A549 (cell line): ENCODE measurements at regions of chr4 and their contacts with region 1.

Region 1: DNA sequence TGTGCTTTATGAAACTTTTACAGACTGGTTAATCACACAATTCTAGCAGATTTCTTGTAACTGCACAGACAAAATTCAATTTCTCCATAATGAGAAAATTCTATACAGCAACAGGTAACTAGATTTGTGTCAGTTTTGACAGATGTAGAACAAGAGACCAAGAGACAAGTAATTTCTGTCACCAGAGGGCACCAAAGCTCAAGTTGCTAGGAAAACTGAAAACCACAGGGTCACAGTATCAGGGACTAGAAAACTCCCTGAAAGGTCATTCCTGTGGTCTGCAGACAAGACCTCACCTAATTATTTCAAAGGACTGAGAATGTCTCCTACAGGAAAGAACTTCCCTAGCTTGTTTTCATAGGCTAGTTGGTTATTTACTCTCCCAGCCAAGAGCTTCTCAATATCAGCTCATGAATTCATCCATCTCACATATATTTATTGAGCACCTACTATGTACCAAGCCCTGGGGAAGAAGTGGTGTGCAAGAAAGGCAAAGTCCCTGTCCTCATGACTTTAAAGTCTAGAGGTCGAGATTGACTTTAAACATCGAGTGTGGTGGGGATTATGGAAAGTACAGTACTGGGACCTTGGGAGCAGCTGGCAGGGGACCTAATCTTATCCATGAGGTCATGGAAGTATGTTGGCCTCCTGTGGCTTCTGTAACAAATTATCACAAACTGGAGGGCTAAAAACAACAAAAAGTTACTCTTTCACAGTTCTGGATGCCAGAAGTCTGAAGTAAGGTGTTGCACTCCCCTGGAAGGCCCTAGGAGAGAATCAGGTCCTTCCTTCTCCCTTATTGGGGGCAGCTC is 47.8 kb upstream of the SETD7 start:
- DNase-seq: peak; percentile 38 to 80
- ATAC-seq: peak; percentile 43 to 51; a peak in 3 of 6 replicates
- H3K4me3 ChIP-seq: no peak overlapping the region
- H3K27ac ChIP-seq: peak overlapping the region; percentile 66 to 94
- H3K4me1 ChIP-seq: peaks cover 67% of the 10 kb centered on the region
- CTCF ChIP-seq: peak; percentile 73
- EP300 ChIP-seq: no peak
- POLR2A ChIP-seq: no peak
- RAD21 ChIP-seq: peak; percentile 77 to 81

Region 2: GRCh38 chr4:139488442-139488841 is 115.3 kb before region 1 on chr4:
- CTCF ChIA-PET with region 1: no interaction called
- POLR2A ChIA-PET with region 1: no interaction called
- DNase-seq: no peak
- ATAC-seq: no peak
- H3K4me3 ChIP-seq: no peak overlapping the region
- H3K27ac ChIP-seq: no peak overlapping the region
- H3K4me1 ChIP-seq: no peaks in the 10 kb centered on the region
- CTCF ChIP-seq: no peak
- EP300 ChIP-seq: no peak
- POLR2A ChIP-seq: no peak
- RAD21 ChIP-seq: no peak

Region 3: DNA sequence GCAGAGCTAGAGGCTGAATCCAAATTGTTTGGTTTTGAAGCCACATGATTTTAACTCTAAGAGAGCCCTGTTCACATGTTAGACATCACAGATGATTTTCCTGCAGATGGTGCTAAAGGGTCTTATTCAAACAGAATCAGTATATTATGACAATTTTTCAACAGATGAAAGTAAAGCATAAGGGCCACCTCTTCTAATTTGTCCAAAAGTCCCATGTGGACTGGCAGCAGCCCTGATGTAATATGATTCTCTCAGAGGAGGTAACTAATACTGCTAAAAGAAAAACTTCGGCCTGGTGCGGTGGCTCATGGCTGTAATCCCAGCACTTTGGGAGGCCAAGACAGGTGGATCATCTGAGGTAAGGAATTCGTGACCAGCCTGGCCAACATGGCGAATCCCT is 21.7 kb before region 1 on chr4:
- CTCF ChIA-PET with region 1: interaction called, 11 read pairs
- POLR2A ChIA-PET with region 1: interaction called, 6 read pairs
- DNase-seq: no peak
- ATAC-seq: peak; percentile 54 to 64; a peak in 2 of 6 replicates
- H3K4me3 ChIP-seq: no peak overlapping the region
- H3K27ac ChIP-seq: peak overlapping the region in 1 of 2 experiments; percentile 39; a peak in 1 of 6 replicates
- H3K4me1 ChIP-seq: peaks cover 11% of the 10 kb centered on the region
- CTCF ChIP-seq: 0 out of 3 replicates have a peak, but pooled peaks have one; percentile 24
- EP300 ChIP-seq: no peak
- POLR2A ChIP-seq: no peak
- RAD21 ChIP-seq: peak; percentile 42 to 47; a peak in 4 of 5 replicates

Region 4: DNA sequence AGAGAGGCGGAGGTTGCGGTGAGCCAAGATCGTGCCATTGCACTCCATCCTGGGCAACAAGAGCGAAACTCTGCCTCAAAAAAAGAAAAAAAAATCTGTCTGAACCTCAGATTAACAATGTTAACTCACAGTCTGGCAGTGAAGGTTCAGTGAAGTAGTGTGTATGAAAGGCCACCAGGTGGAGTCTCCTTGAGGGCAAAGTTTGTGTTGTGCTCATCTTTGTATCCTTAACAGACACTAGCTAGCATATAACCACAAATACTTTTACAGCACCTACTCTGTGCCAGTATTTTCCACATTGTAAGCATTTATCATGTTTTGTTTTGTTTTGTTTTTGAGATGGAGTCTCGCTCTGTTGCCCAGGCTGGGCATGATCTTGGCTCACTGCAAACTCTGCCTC is 15.9 kb after region 1 on chr4:
- CTCF ChIA-PET with region 1: interaction called, 64 read pairs
- POLR2A ChIA-PET with region 1: interaction called, 3 read pairs
- DNase-seq: peak in 1 of 2 experiments; percentile 55
- ATAC-seq: peak; percentile 62 to 92; a peak in 4 of 6 replicates
- H3K4me3 ChIP-seq: no peak overlapping the region
- H3K27ac ChIP-seq: no peak overlapping the region
- H3K4me1 ChIP-seq: no peaks in the 10 kb centered on the region
- CTCF ChIP-seq: peak; percentile 39
- EP300 ChIP-seq: no peak
- POLR2A ChIP-seq: no peak
- RAD21 ChIP-seq: peak; percentile 32 to 50

Region 5: DNA sequence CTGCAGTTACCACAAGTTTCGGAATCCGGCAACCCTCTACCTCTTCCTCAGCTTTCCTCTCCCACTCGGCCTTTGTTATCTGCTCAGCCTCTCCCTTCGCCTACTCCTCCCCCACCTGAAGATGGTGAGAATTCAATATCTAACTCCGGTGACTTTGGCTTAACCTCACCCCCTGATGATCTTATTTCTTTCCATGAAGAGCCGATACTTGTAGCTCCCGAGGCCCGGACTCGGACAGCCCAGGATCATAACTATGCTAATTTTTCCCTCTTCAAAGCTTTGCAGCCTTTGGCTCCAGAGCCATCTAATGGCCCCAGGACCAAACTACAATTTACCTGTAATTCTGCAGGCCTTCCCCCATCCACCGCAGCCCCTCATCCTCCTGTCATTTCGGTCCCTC is 29.9 kb after region 1 on chr4:
- CTCF ChIA-PET with region 1: interaction called, 109 read pairs
- POLR2A ChIA-PET with region 1: interaction called, 9 read pairs
- DNase-seq: peak; percentile 17 to 42
- ATAC-seq: peak; percentile 78 to 93
- H3K4me3 ChIP-seq: 0 out of 3 replicates have a peak overlapping the region, but pooled peaks have one; percentile 6
- H3K27ac ChIP-seq: peak overlapping the region; percentile 37 to 77
- H3K4me1 ChIP-seq: peaks cover 15% of the 10 kb centered on the region
- CTCF ChIP-seq: peak; percentile 58
- EP300 ChIP-seq: no peak
- POLR2A ChIP-seq: no peak
- RAD21 ChIP-seq: peak; percentile 82 to 83

Region 6: GRCh38 chr4:139651282-139652194 is 47.8 kb after region 1 on chr4:
- CTCF ChIA-PET with region 1: interaction called, 260 read pairs
- POLR2A ChIA-PET with region 1: no interaction called
- DNase-seq: peak; percentile 44 to 84
- ATAC-seq: peak; percentile 82 to 85
- H3K4me3 ChIP-seq: no peak overlapping the region
- H3K27ac ChIP-seq: peak overlapping the region; percentile 63 to 81
- H3K4me1 ChIP-seq: peaks cover 29% of the 10 kb centered on the region
- CTCF ChIP-seq: peak; percentile 80
- EP300 ChIP-seq: no peak
- POLR2A ChIP-seq: no peak
- RAD21 ChIP-seq: peak; percentile 75 to 79

Region 7: DNA sequence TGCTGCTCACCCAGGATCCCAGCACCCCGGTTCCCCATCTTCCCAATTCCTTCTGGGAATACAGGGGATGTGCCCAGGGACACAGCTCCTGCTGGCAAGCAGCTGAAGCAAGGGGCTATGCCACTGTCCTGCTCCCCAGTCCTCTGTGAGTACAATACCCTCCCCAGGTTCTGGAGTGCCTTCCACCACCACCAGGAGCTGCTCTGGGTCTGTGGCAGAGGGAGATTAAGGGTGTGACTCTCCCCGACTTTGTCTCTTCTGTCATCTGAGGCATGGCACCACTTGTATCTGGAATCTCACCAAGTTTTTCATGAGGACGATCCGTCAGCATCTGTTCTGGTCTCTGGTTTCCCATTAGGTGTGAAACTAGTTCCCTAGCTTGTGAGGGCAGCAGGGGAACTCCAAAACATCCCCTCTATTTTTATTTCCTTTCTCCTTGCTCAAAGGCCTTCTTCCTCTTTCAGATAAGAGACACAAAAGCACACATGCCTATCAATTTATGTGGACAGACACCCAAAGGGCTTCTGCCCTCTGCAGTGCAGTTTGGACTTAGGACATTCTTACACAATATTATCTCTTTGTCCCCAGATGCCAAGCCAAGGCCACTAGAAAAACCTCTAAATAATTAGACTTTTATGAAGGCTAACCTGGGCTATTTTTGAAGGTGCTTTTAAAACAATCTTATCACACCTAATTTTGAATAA is 88.7 kb after region 1 on chr4:
- CTCF ChIA-PET with region 1: no interaction called
- POLR2A ChIA-PET with region 1: no interaction called
- DNase-seq: peak in 1 of 2 experiments; percentile 11
- ATAC-seq: peak; percentile 76 to 82; a peak in 4 of 6 replicates
- H3K4me3 ChIP-seq: no peak overlapping the region
- H3K27ac ChIP-seq: no peak overlapping the region
- H3K4me1 ChIP-seq: no peaks in the 10 kb centered on the region
- CTCF ChIP-seq: no peak
- EP300 ChIP-seq: no peak
- POLR2A ChIP-seq: no peak
- RAD21 ChIP-seq: peak in 1 of 2 experiments; percentile 32; a peak in 1 of 5 replicates